ENCODE measurements at regions of chr19 and their contacts with region 1.

Region 1: DNA sequence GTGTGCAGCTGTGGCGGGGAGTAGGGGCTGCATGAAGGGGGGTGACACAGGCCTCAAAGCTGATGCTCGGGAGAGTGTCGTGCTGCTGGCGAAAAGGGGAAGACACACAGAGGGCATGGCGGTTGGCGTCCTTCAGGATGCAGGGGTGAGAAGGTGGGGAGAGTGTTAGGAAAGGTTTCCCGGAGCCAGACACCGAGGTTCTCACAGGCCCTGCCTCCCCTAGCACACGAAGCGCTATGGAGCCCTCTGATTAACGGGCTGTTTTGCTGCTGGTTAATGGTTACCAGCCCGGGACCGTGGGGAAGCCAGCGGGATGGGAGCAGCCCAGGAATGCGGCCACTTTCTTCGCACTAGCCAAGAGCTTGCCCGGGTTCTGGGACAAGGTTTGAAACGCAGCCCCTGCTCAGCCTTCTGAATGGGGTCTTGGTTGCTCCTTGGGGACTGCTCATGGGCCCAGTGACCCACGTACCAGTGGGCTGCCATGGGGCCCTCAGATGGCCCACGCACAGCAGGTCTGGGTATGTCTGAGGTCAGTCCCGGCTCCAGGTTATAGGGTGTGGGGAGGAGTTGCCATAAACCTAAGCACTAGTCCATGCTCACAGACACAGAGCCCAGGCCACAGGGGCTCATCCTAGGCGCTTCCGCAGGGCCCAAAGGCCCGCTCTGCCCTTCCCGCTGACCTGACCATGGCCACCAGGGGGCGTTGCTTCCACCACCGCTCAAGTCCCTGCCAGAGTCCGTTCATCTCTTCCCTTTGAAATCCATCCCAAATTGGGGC is 31.3 kb upstream of the ISYNA1 start:
- DNase-seq: peak; percentile 71
- H3K4me3 ChIP-seq: no peak overlapping the region
- H3K27ac ChIP-seq: peak overlapping the region in 2 of 4 donors; percentile 4 to 11
- H3K4me1 ChIP-seq: peaks cover 41 to 54% (median 49%) of the 10 kb centered on the region in 4 donors
- H3K27me3 ChIP-seq: no peaks in the 10 kb centered on the region
- CTCF ChIP-seq: peak; percentile 75 to 86 (median 83)
- EP300 ChIP-seq: no peak
- POLR2A ChIP-seq: no peak

Region 2: DNA sequence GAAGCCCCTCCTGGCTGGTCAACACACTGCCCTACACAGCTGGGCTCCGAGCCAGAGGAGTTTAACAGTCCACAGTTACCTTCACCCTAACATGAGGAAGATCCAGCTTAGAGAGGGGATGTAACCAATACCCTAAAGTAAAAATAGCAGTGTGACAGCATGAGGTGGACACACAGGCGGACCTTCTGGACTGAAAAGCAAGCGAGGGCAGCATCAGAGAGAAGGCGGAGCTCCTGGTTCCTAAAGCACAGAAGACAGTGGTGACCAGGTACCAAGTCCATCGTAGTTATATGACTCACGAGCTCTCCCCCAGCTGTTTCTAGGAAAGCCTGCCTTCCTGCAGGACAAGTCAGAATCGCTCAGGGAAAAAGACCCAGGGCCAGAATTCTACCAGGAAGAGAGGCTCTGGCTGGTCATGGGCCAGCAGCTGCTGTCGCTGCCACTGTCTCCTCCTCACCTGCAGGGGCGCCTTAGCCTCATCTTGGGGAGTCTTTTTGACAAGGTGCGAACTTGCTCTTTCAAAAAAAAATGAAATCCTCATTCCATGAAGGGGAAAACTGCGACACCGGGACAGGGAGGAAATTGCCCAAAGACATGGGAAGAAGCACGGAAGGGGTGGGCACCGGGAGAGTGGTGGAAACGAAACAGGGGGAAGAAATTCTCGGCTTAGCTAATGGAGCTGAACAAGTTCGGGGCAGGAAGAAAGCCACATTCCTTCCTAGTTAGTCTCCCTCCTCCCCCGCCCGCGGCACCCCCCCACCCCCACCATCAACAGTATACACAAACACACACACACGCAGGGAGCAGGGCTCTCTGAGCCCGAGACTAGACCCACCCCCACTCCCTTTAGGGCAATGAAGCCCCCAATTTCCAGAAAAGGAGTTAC is 50.9 kb after region 1 on chr19:
- in situ Hi-C with region 1: no loop called
- intact Hi-C with region 1: loop called (anchors 10 kb)
- DNase-seq: peak; percentile 83
- H3K4me3 ChIP-seq: peak overlapping the region; percentile 66 to 99 (median 89)
- H3K27ac ChIP-seq: peak overlapping the region; percentile 97 to 100 (median 98)
- H3K4me1 ChIP-seq: peaks cover 13 to 54% (median 31%) of the 10 kb centered on the region in 4 donors
- H3K27me3 ChIP-seq: no peaks in the 10 kb centered on the region
- CTCF ChIP-seq: peak; percentile 62 to 87 (median 65)
- EP300 ChIP-seq: no peak
- POLR2A ChIP-seq: peak; percentile 64

Region 3: GRCh38 chr19:18542936-18543815 is 73.9 kb after region 1 on chr19 and contains the start of gene FKBP8:
- in situ Hi-C with region 1: no loop called
- intact Hi-C with region 1: no loop called
- DNase-seq: peak; percentile 97
- H3K4me3 ChIP-seq: peak within 1 kb of the TSS; percentile 75 to 94 (median 82)
- H3K27ac ChIP-seq: peak within 1 kb of the TSS; percentile 88 to 95 (median 91)
- H3K4me1 ChIP-seq: peaks cover 14 to 20% (median 17%) of the 10 kb centered on the region in 4 donors
- H3K27me3 ChIP-seq: no peaks in the 10 kb centered on the region
- CTCF ChIP-seq: no peak
- EP300 ChIP-seq: no peak
- POLR2A ChIP-seq: no peak
- total RNA-seq, gene FKBP8: 267 to 318 (median 275) TPM

Measured in transverse colon (tissue), 4 donors.